ENCODE measurements at regions of chr12 and their contacts with region 1.

Region 1: DNA sequence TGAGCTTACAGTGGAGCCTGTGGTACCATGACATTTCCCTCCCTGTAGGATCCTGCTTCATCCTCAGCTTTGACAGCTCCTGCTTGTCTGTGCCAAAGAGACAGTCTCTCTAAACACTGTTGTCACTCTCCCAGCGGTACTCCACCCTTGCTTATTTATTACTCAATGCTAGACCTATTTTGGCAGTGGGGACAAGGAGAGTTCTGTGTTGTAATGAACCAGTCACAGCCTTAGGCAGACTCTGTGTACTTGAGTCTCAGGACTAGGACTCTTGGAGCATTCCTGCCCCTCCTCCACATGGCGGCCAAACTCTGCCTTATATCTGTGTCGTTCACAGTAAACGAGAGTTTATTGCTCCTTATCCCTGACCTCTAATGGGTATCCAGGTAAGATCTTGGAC is 70.9 kb downstream of the PIK3C2G start:
- DNase-seq: no peak
- ATAC-seq: no peak
- H3K4me3 ChIP-seq: no peak overlapping the region
- H3K4me3 Mint-ChIP-seq: no peak overlapping the region
- H3K27ac ChIP-seq: no peak overlapping the region
- H3K27ac Mint-ChIP-seq: no peak overlapping the region
- H3K4me1 ChIP-seq: no peaks in the 10 kb centered on the region
- H3K4me1 Mint-ChIP-seq: no peaks in the 10 kb centered on the region
- H3K27me3 ChIP-seq: no peaks in the 10 kb centered on the region
- H3K27me3 Mint-ChIP-seq: no peaks in the 10 kb centered on the region

Region 2: DNA sequence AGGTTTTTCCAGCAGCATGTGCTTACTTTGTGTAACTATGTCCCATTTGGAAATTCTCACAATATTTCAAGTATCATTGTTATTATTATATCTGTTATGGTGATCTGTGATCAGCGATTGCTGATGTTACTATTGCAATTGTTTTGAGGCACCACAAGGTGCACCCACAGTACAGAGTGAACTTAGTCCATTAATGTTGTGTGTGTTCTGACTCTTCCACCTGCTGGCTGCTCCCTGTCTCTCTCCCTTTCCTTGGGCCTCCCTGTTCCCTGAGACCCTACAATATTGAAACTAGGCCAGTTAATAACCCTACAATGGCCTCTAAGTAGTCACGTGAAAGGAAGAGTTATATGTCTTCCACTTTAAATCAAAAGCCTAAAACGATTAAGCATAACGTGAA is 83.1 kb after region 1 on chr12:
- CTCF ChIA-PET with region 1: no interaction called
- POLR2A ChIA-PET with region 1: interaction called in 1 of 2 experiments, 11 read pairs
- DNase-seq: no peak
- ATAC-seq: no peak
- H3K4me3 ChIP-seq: no peak overlapping the region
- H3K4me3 Mint-ChIP-seq: no peak overlapping the region
- H3K27ac ChIP-seq: no peak overlapping the region
- H3K27ac Mint-ChIP-seq: no peak overlapping the region
- H3K4me1 ChIP-seq: no peaks in the 10 kb centered on the region
- H3K4me1 Mint-ChIP-seq: no peaks in the 10 kb centered on the region
- H3K27me3 ChIP-seq: no peaks in the 10 kb centered on the region
- H3K27me3 Mint-ChIP-seq: no peaks in the 10 kb centered on the region

Measured in T-cell (primary cell).